Mammary epithelial cell (primary cell): ENCODE measurements at regions of chr12 and their contacts with region 1.

Region 1: DNA sequence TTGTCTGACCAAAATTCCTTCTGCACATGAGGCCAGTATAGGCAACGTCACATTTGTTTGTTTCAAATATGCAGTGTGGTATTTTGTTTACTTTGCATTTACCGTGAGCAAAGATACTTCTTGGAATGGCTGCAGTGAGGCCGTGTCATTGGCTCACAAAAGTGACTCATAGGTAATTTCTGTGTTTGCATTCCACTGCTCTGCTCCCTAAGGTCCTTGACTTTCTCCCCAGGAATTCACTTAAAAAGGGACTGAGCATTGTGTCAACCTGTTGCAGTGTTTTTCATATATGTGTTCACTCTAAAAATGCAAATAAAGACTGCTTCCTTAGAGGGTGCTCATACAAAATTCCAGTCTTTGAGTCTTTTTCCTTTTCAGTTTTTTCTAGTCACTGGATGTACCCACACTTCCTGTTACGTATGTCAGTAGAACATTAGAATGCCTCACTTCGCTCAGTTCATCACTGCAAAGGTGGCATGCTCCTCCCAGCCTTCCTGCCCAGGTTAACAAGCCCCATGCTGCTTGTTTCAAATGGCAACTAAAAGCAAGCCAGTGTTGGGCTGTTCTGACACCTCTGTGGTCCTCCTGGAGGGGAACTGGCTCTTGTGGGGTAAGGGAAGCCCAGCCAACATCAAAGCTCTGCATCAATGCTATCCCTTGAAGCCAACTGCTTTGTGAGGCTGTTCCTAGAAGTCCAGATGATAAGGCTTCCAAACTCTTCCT is 9.1 kb downstream of the C12orf76 start:
- DNase-seq: peak; percentile 76
- H3K4me3 ChIP-seq: no peak overlapping the region
- H3K27ac ChIP-seq: peak overlapping the region; percentile 28
- H3K4me1 ChIP-seq: peaks cover 16% of the 10 kb centered on the region
- H3K27me3 ChIP-seq: no peaks in the 10 kb centered on the region
- CTCF ChIP-seq: no peak

Region 2: GRCh38 chr12:109934026-109934425 is 105.2 kb before region 1 on chr12:
- CTCF ChIA-PET with region 1: no interaction called
- dilution Hi-C with region 1: no loop called
- in situ Hi-C with region 1: no loop called
- intact Hi-C with region 1: loop called (anchors 5 kb)
- DNase-seq: no peak
- H3K4me3 ChIP-seq: no peak overlapping the region
- H3K27ac ChIP-seq: no peak overlapping the region
- H3K4me1 ChIP-seq: no peaks in the 10 kb centered on the region
- H3K27me3 ChIP-seq: no peaks in the 10 kb centered on the region
- CTCF ChIP-seq: peak; percentile 9 to 20